Activated CD4-positive, alpha-beta T cell treated with anti-CD3 and anti-CD28 coated beads for 36 hours (primary cell): ENCODE measurements at regions of chr1 and their contacts with region 1.

Region 1: GRCh38 chr1:185439727-185440415 is 122.8 kb upstream of the IVNS1ABP start:
- DNase-seq: peak; percentile 54
- ATAC-seq: peak; percentile 87
- H3K4me3 Mint-ChIP-seq: no peak overlapping the region
- H3K27ac Mint-ChIP-seq: no peak overlapping the region
- H3K4me1 Mint-ChIP-seq: peaks cover 7% of the 10 kb centered on the region
- H3K27me3 Mint-ChIP-seq: no peaks in the 10 kb centered on the region

Region 2: DNA sequence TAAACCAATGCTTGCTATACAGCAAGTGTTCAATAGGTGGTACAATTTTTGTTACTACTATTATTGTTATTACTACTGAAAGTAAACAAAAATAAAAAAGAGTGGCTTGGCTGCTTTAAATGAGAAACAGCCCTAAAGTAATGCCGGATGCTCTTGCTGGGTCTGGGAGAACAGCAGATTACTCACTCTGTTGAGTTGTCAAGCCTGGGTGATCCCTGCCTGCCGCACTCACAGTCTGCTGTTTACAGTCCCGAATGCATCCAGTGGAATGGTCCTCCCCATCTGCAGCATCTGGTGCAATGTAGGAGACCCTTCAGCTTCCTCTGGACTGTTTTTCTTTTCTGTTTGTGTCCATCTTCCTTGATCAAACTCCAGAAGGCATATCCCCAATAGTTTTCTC is 20.2 kb before region 1 on chr1:
- CTCF ChIA-PET with region 1: no interaction called
- POLR2A ChIA-PET with region 1: no interaction called
- intact Hi-C with region 1: no loop called
- DNase-seq: no peak
- ATAC-seq: no peak
- H3K4me3 Mint-ChIP-seq: no peak overlapping the region
- H3K27ac Mint-ChIP-seq: no peak overlapping the region
- H3K4me1 Mint-ChIP-seq: peaks cover 10% of the 10 kb centered on the region
- H3K27me3 Mint-ChIP-seq: no peaks in the 10 kb centered on the region

Region 3: DNA sequence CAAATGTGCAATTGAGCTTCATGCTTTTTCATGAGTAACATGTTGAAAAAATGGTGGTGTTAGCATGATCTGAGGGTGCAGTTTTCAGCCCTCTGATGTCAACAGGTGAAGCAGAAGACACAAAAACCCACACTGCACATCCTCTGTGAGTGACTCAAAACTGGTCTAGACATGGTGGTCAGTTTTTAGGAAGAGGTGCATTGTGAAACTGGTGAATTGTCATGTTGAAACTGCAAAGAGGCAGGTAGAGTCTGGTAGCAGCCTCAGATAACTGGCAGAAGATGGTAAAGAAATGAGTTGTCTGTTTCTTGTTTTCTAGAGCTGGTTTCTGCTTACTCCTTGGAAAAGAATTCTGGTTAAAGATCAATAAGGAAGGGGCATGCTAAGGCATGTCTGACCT is 197.0 kb after region 1 on chr1:
- CTCF ChIA-PET with region 1: no interaction called
- POLR2A ChIA-PET with region 1: no interaction called
- intact Hi-C with region 1: loop called (anchors 2 to 5 kb)
- DNase-seq: peak; percentile 63
- ATAC-seq: peak; percentile 95
- H3K4me3 Mint-ChIP-seq: no peak overlapping the region
- H3K27ac Mint-ChIP-seq: peak overlapping the region; percentile 69
- H3K4me1 Mint-ChIP-seq: peaks cover 14% of the 10 kb centered on the region
- H3K27me3 Mint-ChIP-seq: no peaks in the 10 kb centered on the region